H1 (cell line): ENCODE measurements at regions of chr1 and their contacts with region 1.

Region 1: GRCh38 chr1:44786138-44786840 is 1.7 kb downstream of the BEST4 start:
- DNase-seq: peak in 1 of 2 experiments; percentile 94
- H3K4me3 ChIP-seq: peak overlapping the region; percentile 17 to 58 (median 46)
- H3K27ac ChIP-seq: no peak overlapping the region
- H3K4me1 ChIP-seq: peaks cover 4 to 18% (median 14%) of the 10 kb centered on the region in 4 experiments
- H3K27me3 ChIP-seq: peaks cover 0 to 7% (median 2%) of the 10 kb centered on the region in 4 experiments; a peak in 3 of 7 replicates
- CTCF ChIP-seq: peak; percentile 80 to 100 (median 100)
- EP300 ChIP-seq: peak in 1 of 2 experiments; percentile 98; a peak in 1 of 3 replicates
- POLR2A ChIP-seq: peak in 1 of 2 experiments; percentile 50; a peak in 1 of 3 replicates
- RAD21 ChIP-seq: peak; percentile 83 to 84

Region 2: GRCh38 chr1:44576456-44577150 is 209.7 kb before region 1 on chr1:
- CTCF ChIA-PET with region 1: no interaction called
- POLR2A ChIA-PET with region 1: no interaction called
- DNase-seq: no peak
- H3K4me3 ChIP-seq: no peak overlapping the region
- H3K27ac ChIP-seq: peak overlapping the region; percentile 1; the same call in 1 of the 2 replicates
- H3K4me1 ChIP-seq: peaks cover 4 to 9% (median 6%) of the 10 kb centered on the region in 4 experiments; a peak in 6 of 7 replicates
- H3K27me3 ChIP-seq: no peaks in the 10 kb centered on the region
- CTCF ChIP-seq: no peak
- EP300 ChIP-seq: peak in 1 of 2 experiments; percentile 54; a peak in 1 of 3 replicates
- POLR2A ChIP-seq: no peak
- RAD21 ChIP-seq: no peak

Region 3: GRCh38 chr1:44730741-44731512 is 55.4 kb before region 1 on chr1 and contains the start of gene RNU5D-1:
- CTCF ChIA-PET with region 1: interaction called, 67 read pairs
- POLR2A ChIA-PET with region 1: interaction called, 428 read pairs
- DNase-seq: peak in 1 of 2 experiments; percentile 94
- H3K4me3 ChIP-seq: peak within 1 kb of the TSS in 1 of 4 experiments; percentile 31; a peak in 1 of 8 replicates
- H3K27ac ChIP-seq: peak within 1 kb of the TSS; percentile 94
- H3K4me1 ChIP-seq: peaks cover 0 to 3% (median under 1%) of the 10 kb centered on the region in 4 experiments; a peak in 4 of 7 replicates
- H3K27me3 ChIP-seq: no peaks in the 10 kb centered on the region
- CTCF ChIP-seq: peak; percentile 48 to 80 (median 55)
- EP300 ChIP-seq: 0 out of 3 replicates have a peak, but pooled peaks of 1 of the 2 experiments have one; percentile 30
- POLR2A ChIP-seq: peak; percentile 99
- RAD21 ChIP-seq: peak; percentile 14 to 32; a peak in 1 of 4 replicates
- total RNA-seq, gene RNU5D-1: 17.4 TPM in 1 of 2 replicates, not detected in the other

Region 4: GRCh38 chr1:44799770-44800584 is 13.7 kb after region 1 on chr1 and contains the start of gene PLK3:
- CTCF ChIA-PET with region 1: interaction called, 33 read pairs
- POLR2A ChIA-PET with region 1: interaction called, 52 read pairs
- DNase-seq: peak; percentile 93 to 98
- H3K4me3 ChIP-seq: peak within 1 kb of the TSS; percentile 60 to 76 (median 66)
- H3K27ac ChIP-seq: peak within 1 kb of the TSS; percentile 91
- H3K4me1 ChIP-seq: peaks cover 0 to 5% (median 2%) of the 10 kb centered on the region in 4 experiments; a peak in 3 of 7 replicates
- H3K27me3 ChIP-seq: peaks cover 0 to 5% (median 0%) of the 10 kb centered on the region in 4 experiments; a peak in 2 of 7 replicates
- CTCF ChIP-seq: peak in 2 of 3 experiments; percentile 89 to 97; a peak in 3 of 4 replicates
- EP300 ChIP-seq: no peak
- POLR2A ChIP-seq: peak in 1 of 2 experiments; percentile 98; a peak in 2 of 3 replicates
- RAD21 ChIP-seq: peak; percentile 71 to 79
- total RNA-seq, gene PLK3: 7.9 and 9.7 TPM in 2 replicates

Region 5: GRCh38 chr1:44826375-44827196 is 40.3 kb after region 1 on chr1:
- CTCF ChIA-PET with region 1: interaction called, 14 read pairs
- POLR2A ChIA-PET with region 1: interaction called, 147 read pairs
- DNase-seq: no peak
- H3K4me3 ChIP-seq: no peak overlapping the region
- H3K27ac ChIP-seq: no peak overlapping the region
- H3K4me1 ChIP-seq: peaks cover 0 to 9% (median 2%) of the 10 kb centered on the region in 4 experiments; a peak in 6 of 7 replicates
- H3K27me3 ChIP-seq: no peaks in the 10 kb centered on the region
- CTCF ChIP-seq: no peak
- EP300 ChIP-seq: no peak
- POLR2A ChIP-seq: no peak
- RAD21 ChIP-seq: no peak